BJ (cell line): ENCODE measurements at regions of chr14 and their contacts with region 1.

Region 1: DNA sequence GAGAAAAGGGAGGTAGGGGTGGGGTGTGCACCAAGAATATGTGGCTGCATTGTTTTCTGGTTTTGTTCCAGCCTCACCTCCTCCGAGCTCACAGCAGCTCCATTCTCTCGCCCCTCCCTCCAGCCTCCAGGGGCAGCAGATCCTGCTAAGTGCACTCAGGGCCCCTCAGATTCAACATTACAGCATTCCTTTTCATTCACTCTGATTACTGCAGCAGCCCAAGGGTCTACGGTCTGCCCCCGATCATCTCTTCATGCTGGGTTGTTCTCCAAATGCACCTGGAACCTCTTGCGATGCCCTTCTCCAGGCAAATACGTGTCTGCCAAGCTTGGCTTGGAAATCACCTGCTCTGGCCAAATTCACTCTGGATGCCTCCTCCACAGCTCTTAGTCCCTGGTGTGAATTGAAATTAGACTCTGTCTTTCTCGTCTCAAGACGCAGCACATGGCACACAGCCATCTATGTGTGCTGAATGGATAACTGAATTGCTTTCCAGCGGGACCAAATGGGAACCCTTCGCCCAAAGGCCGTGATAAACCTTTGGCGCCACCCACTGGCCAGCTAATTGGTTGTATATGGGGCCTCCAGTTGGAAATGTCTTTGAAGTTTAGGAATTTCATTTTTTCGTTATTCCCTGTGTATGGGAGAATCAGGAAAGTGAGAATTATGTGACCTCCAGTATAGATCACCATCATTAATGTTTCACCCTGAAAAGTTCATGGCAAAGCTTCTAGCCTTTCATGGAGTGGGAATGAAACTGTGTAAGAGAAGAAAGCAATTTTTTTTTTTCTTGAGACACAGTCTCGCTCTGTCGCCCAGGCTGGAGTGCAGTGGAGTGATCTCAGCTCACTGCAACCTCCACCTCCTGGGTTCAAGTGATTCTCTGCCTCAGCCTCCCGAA is 9.6 kb upstream of the HSP90AA1 start:
- DNase-seq: no peak
- H3K4me3 ChIP-seq: no peak overlapping the region
- H3K27me3 ChIP-seq: no peaks in the 10 kb centered on the region
- CTCF ChIP-seq: peak; percentile 85

Region 2: GRCh38 chr14:101953151-101953550 is 143.3 kb before region 1 on chr14:
- CTCF ChIA-PET with region 1: interaction called, 39 read pairs
- POLR2A ChIA-PET with region 1: no interaction called
- DNase-seq: no peak
- H3K4me3 ChIP-seq: no peak overlapping the region
- H3K27me3 ChIP-seq: no peaks in the 10 kb centered on the region
- CTCF ChIP-seq: no peak

Region 3: GRCh38 chr14:102033241-102033640 is 63.2 kb before region 1 on chr14:
- CTCF ChIA-PET with region 1: interaction called, 10 read pairs
- POLR2A ChIA-PET with region 1: no interaction called
- DNase-seq: no peak
- H3K4me3 ChIP-seq: no peak overlapping the region
- H3K27me3 ChIP-seq: no peaks in the 10 kb centered on the region
- CTCF ChIP-seq: no peak

Region 4: GRCh38 chr14:102063091-102063802 is 33.2 kb before region 1 on chr14:
- CTCF ChIA-PET with region 1: interaction called, 38 read pairs
- POLR2A ChIA-PET with region 1: interaction called, 3 read pairs
- DNase-seq: peak; percentile 71
- H3K4me3 ChIP-seq: no peak overlapping the region
- H3K27me3 ChIP-seq: no peaks in the 10 kb centered on the region
- CTCF ChIP-seq: peak; percentile 55